Aorta (tissue), 5 donors: ENCODE measurements at regions of chr3 and their contacts with region 1.

Region 1: DNA sequence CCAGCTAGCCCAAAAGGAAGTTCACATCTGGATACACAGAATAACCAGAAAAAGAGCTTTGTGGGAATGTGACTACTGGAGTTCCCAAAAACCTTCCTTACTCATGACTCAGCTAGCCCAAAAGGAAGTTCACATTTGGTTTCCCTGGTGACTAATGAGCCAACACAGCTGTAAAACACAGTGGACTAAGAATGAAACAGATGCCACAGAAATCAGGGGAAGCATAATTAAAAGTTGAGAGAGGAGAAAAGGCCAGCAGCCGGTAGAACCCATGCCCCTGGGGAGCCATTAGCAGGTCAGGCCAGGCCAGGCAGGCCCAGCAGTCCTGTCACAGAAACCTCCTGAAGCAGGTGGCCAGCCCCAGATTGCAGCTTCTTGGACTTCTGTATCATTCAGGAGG is 130.3 kb downstream of the GHSR start:
- DNase-seq: peak; percentile 70 to 82
- ATAC-seq: peak; percentile 86
- H3K4me3 ChIP-seq: no peak overlapping the region
- H3K27ac ChIP-seq: peak overlapping the region; percentile 86 to 99
- H3K4me1 ChIP-seq: peaks cover 16 to 34% of the 10 kb centered on the region in 2 donors
- H3K27me3 ChIP-seq: no peaks in the 10 kb centered on the region

Region 2: DNA sequence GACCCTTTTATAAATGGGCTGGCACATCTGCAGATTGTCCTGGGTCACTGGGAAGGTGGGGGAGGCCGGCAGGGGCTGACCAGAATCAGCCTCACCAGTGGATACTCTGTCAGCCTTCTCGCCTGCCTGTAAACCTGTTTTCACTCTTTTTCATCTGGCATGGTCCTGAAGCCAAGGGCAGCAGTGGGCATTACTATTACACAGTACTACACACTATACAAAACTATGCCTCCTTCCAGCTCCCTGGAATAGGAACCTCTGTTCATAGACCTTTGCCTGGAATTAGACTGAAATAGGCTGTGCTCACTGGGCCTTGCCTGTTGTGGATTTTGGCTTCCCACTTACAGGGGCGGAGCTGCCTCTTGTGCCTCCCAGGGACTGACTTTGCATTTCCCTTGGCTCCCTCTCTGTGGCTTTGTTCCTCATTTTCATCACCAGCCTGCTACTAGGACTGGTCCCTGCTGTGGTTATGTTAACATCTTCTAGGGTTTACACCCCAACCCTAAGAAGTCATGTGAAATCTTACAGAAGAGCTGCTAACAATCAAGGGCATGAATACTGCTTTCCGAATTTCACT is 157.9 kb before region 1 on chr3:
- intact Hi-C with region 1: loop called in 1 of 2 experiments (anchors 5 kb)
- DNase-seq: peak; percentile 82 to 89
- ATAC-seq: peak; percentile 93
- H3K4me3 ChIP-seq: no peak overlapping the region
- H3K27ac ChIP-seq: peak overlapping the region; percentile 18 to 19
- H3K4me1 ChIP-seq: peaks cover 1 to 16% of the 10 kb centered on the region in 2 donors
- H3K27me3 ChIP-seq: no peaks in the 10 kb centered on the region

Region 3: DNA sequence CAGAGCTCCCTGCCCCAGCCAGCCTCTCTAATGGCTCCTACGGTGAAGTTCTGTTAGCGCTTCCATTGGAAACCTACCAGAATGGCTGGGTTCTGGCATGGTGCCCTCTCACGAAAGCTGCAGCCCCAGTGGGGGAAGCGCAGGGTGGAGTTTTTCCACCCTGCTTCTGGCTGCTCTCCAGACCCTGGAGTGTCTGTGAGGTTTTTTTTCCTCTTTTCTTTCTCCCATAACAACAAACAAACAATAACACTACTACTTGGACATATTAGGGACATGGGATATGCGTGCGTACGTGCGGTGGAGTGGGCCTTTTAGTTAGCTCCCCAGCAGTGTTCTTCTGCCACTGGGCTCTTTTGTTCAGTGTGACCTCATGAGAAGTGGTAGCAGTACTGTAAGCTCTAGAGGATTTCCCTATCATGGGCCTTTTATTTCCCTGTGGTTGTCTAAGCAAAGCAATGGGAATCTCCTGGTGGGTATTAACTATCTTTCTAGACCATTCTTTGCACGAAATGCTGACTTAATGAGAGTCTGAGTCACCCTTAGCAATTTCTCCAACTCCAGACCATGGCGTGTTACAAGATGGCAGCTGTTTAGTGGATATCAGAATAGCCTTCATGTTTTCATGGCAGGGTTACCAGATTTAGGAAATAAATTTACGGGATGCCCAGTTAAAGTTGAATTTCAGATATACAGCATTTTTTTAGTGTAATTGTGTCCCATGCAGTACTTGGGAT is 116.7 kb before region 1 on chr3:
- intact Hi-C with region 1: loop called in 1 of 2 experiments (anchors 10 kb)
- DNase-seq: peak; percentile 89 to 90
- ATAC-seq: peak; percentile 72
- H3K4me3 ChIP-seq: no peak overlapping the region
- H3K27ac ChIP-seq: peak overlapping the region; percentile 28 to 98
- H3K4me1 ChIP-seq: peaks cover 13 to 16% of the 10 kb centered on the region in 2 donors
- H3K27me3 ChIP-seq: no peaks in the 10 kb centered on the region

Region 4: GRCh38 chr3:172256101-172256734 is 61.8 kb before region 1 on chr3:
- intact Hi-C with region 1: loop called in 1 of 2 experiments (anchors 5 kb)
- DNase-seq: no peak
- ATAC-seq: peak; percentile 82
- H3K4me3 ChIP-seq: no peak overlapping the region
- H3K27ac ChIP-seq: peak overlapping the region; percentile 53 to 92
- H3K4me1 ChIP-seq: peaks cover 15 to 17% of the 10 kb centered on the region in 2 donors
- H3K27me3 ChIP-seq: no peaks in the 10 kb centered on the region

Region 5: GRCh38 chr3:172280406-172281051 is 37.5 kb before region 1 on chr3:
- intact Hi-C with region 1: no loop called
- DNase-seq: no peak
- ATAC-seq: no peak
- H3K4me3 ChIP-seq: no peak overlapping the region
- H3K27ac ChIP-seq: no peak overlapping the region
- H3K4me1 ChIP-seq: peaks cover 1 to 12% of the 10 kb centered on the region in 2 donors
- H3K27me3 ChIP-seq: no peaks in the 10 kb centered on the region

Region 6: GRCh38 chr3:172666873-172667694 is 349.1 kb after region 1 on chr3:
- intact Hi-C with region 1: no loop called
- DNase-seq: peak; percentile 75 to 79
- ATAC-seq: peak; percentile 91
- H3K4me3 ChIP-seq: no peak overlapping the region
- H3K27ac ChIP-seq: no peak overlapping the region
- H3K4me1 ChIP-seq: no peaks in the 10 kb centered on the region
- H3K27me3 ChIP-seq: no peaks in the 10 kb centered on the region